ENCODE measurements at regions of chr15 and their contacts with region 1.

Region 1: DNA sequence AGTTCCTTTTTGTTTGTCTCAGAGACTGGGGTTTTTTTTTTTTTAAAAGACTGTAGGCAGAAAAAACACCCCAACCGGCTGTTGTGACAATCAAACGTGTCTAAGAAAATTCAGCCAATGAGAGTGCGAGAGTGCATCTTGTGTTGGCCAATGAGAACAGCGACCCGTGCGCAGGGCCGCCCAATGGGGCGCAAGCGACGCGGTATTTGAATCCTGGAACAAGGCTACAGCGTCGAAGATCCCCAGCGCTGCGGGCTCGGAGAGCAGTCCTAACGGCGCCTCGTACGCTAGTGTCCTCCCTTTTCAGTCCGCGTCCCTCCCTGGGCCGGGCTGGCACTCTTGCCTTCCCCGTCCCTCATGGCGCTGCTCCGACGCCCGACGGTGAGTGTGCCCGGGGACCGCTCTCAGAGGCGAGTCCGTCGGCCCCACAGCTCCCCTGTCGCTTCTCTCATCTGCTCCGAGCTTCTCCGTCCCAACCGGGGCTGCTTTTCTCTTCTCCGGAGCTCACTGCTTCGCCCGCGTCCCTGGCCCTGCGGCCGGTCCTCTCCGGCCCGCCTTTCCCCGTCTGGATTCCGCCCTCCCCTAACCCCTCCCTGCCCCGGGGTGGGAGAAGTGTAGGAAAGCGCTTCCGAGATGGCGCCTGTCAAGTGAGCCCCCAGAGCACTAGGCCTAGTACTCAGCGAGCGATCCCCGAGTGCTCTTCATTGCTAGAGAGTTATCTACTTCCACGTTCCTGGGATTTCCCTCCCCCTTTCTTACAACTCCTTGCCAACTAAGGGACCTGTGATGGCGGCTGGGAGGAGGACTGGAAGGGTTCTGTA is at the start of gene CCNB2:
- DNase-seq: peak; percentile 92
- H3K4me3 ChIP-seq: peak within 1 kb of the TSS; percentile 81 to 90 (median 85)
- H3K27ac ChIP-seq: peak within 1 kb of the TSS; percentile 76
- H3K4me1 ChIP-seq: peaks cover 5% of the 10 kb centered on the region
- H3K27me3 ChIP-seq: no peaks in the 10 kb centered on the region
- CTCF ChIP-seq: no peak
- total RNA-seq, gene CCNB2: 2.8 to 37.4 TPM

Region 2: DNA sequence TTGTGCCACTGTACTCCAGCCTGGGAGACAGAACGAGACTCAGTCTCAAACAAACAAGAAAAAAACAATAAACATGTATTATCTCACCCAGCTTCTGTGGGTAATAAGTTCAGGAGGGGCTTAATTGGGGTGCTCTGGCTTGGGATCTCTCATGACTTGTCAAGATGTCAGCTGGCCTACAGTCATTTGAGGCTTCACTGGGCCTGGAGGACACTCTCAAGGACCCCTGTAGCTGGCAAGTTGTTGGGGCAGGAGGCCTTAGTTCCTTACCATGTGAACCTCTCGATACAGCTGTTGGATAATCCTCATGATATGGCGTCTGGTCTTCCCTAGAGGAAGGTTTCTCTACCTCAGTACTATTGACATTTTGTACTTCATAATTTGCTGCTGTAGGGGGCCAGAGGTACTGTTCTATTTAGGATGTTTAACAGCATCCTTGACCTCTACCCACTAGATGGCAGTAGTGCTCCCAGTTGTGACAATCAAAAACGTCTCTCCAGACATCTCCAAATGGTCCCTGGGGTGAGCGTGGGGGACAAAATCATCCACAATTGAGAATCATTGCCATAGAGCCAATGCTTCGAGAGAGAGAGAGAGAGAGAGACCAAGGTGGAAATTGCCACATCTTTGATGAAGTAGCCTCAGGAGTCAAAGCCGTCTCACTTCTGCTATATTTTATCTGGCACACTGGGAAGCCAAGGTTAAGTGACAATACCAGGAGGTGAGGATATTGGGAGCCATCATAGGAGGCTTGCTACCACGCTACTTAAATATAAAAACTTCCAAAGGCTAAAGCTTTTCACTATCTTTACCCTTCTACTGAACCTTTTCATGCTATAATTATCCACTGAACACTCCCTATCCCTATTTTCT is 147.8 kb before region 1 on chr15:
- CTCF ChIA-PET with region 1: no interaction called
- dilution Hi-C with region 1: no loop called
- in situ Hi-C with region 1: no loop called
- intact Hi-C with region 1: loop called (anchors 1 kb)
- DNase-seq: peak; percentile 44
- H3K4me3 ChIP-seq: no peak overlapping the region
- H3K27ac ChIP-seq: no peak overlapping the region
- H3K4me1 ChIP-seq: peaks cover 8% of the 10 kb centered on the region
- H3K27me3 ChIP-seq: no peaks in the 10 kb centered on the region
- CTCF ChIP-seq: peak; percentile 78 to 88

Region 3: DNA sequence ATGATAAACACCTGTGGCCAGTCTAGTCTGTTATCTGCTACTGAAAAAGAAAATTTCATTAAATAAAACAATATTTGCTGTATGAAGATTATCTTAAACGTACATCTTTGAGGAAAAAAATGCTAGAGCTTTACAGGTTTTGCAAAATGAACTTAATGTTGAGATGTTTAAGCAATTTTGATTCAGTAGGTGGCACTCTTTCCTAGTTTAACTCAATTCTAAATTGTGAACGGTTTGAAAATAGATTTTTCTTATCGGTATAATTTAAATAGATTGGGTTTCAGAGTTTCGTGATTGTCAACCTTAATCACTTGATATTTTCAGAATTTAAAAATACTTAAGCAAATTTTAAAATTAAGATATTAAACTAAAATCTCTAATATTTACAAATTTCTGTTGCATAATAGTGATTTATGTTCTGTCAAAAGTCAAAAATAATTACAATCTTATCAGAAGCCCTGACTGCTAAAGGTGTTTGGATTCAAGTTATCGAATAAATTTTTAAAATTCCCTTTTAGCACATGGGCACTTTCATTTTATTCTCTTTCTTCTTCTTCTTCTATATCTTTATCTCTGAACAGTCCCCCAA is 124.7 kb before region 1 on chr15:
- CTCF ChIA-PET with region 1: no interaction called
- dilution Hi-C with region 1: no loop called
- in situ Hi-C with region 1: no loop called
- intact Hi-C with region 1: loop called (anchors 2 kb)
- DNase-seq: no peak
- H3K4me3 ChIP-seq: no peak overlapping the region
- H3K27ac ChIP-seq: no peak overlapping the region
- H3K4me1 ChIP-seq: no peaks in the 10 kb centered on the region
- H3K27me3 ChIP-seq: no peaks in the 10 kb centered on the region
- CTCF ChIP-seq: peak; percentile 32 to 50